HEK293 (cell line): ENCODE measurements at regions of chr1 and their contacts with region 1.

Region 1: DNA sequence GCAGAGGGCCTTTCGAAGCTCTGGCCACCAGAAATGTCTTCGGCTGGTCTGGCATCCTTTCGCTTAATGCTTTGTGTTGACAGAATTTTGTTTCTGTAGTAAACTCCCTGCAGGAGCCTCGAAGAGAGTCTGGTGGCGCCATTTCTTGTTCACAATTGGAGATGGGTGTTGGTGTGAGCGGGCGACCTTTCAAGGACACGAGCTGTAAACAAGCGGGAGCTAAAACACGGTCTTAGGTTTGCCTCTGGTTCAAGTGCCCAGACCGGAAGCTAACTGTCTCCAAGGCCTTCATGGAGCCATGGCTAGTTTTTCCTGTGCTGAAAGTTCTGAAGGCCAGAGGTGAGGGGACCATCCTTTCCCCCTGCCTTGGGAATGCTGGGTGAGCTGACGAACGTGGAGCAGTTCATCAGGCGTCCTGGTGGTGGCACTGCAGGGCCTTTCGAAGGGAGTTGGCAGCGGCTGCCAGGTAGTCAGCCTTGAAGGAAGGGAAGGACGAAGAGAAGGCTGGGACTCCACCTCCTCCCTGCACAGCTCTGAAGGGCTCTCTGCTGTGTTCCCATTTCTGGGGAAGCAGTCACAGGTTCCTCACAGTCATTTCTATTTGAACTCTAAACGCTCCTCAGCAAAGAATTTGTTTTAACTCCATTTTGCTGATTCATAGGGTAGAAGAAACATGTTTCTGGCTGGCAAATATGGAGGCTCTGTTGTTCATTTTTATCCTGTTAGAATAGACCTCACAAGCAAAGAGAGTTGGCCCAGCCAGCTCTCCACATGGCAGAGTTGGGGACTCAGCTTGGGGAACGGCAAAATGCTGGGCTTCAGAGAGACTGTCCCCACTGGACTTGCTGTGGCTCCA is 35.2 kb downstream of the URB2 start:
- H3K4me3 ChIP-seq: no peak overlapping the region
- H3K27ac ChIP-seq: no peak overlapping the region
- H3K4me1 ChIP-seq: 0 out of 2 replicates have a peak, but pooled peaks cover 4% of the 10 kb centered on the region
- CTCF ChIP-seq: peak; percentile 85

Region 2: GRCh38 chr1:229648406-229648805 is 12.8 kb before region 1 on chr1:
- CTCF ChIA-PET with region 1: interaction called, 11 read pairs
- POLR2A ChIA-PET with region 1: no interaction called
- H3K4me3 ChIP-seq: no peak overlapping the region
- H3K27ac ChIP-seq: no peak overlapping the region
- H3K4me1 ChIP-seq: no peaks in the 10 kb centered on the region
- CTCF ChIP-seq: no peak

Region 3: GRCh38 chr1:229714964-229715603 is 53.8 kb after region 1 on chr1:
- CTCF ChIA-PET with region 1: interaction called, 12 read pairs
- POLR2A ChIA-PET with region 1: no interaction called
- H3K4me3 ChIP-seq: no peak overlapping the region
- H3K27ac ChIP-seq: no peak overlapping the region
- H3K4me1 ChIP-seq: no peaks in the 10 kb centered on the region
- CTCF ChIP-seq: no peak

Region 4: GRCh38 chr1:229848752-229849677 is 187.8 kb after region 1 on chr1:
- CTCF ChIA-PET with region 1: interaction called, 15 read pairs
- POLR2A ChIA-PET with region 1: no interaction called
- H3K4me3 ChIP-seq: no peak overlapping the region
- H3K27ac ChIP-seq: no peak overlapping the region
- H3K4me1 ChIP-seq: peaks cover 5% of the 10 kb centered on the region
- CTCF ChIP-seq: no peak

Region 5: DNA sequence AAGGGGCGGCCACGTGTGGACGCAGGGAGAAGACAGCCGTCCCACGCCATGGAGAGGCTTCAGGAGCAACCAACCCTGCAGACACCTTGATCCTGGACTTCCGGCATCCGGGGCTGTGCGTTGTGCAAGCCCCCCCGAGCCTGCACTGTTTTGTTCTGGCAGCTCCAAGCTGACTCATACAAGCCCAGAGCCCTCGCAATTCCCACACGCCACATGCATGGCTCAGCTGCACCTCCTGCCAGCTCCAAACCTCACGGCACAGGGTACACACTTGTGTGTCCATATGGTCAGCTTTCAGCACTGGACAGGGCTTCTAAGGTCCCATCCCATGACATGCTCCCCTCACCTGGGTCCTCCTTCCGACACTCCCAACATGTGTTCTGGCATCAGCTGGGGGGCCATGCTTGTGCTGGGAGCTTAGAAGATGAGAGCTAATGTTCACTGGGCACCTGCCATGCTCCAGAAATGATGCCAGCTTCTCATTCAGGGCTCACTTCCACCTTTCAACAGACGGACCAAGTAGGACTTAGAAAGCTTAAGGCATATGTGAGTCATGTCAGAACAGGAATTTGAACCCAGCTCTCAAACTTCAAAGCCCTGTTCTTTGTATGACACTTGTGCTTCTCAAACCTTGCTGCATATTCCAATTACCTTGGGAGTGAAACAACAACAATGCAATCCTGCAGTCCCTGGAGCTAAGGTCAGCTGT is 627.5 kb after region 1 on chr1:
- CTCF ChIA-PET with region 1: interaction called, 10 read pairs
- POLR2A ChIA-PET with region 1: no interaction called
- H3K4me3 ChIP-seq: no peak overlapping the region
- H3K27ac ChIP-seq: no peak overlapping the region
- H3K4me1 ChIP-seq: no peaks in the 10 kb centered on the region
- CTCF ChIP-seq: no peak

Region 6: GRCh38 chr1:230303822-230304221 is 642.6 kb after region 1 on chr1:
- CTCF ChIA-PET with region 1: interaction called, 14 read pairs
- POLR2A ChIA-PET with region 1: no interaction called
- H3K4me3 ChIP-seq: no peak overlapping the region
- H3K27ac ChIP-seq: no peak overlapping the region
- H3K4me1 ChIP-seq: no peaks in the 10 kb centered on the region
- CTCF ChIP-seq: no peak

Region 7: DNA sequence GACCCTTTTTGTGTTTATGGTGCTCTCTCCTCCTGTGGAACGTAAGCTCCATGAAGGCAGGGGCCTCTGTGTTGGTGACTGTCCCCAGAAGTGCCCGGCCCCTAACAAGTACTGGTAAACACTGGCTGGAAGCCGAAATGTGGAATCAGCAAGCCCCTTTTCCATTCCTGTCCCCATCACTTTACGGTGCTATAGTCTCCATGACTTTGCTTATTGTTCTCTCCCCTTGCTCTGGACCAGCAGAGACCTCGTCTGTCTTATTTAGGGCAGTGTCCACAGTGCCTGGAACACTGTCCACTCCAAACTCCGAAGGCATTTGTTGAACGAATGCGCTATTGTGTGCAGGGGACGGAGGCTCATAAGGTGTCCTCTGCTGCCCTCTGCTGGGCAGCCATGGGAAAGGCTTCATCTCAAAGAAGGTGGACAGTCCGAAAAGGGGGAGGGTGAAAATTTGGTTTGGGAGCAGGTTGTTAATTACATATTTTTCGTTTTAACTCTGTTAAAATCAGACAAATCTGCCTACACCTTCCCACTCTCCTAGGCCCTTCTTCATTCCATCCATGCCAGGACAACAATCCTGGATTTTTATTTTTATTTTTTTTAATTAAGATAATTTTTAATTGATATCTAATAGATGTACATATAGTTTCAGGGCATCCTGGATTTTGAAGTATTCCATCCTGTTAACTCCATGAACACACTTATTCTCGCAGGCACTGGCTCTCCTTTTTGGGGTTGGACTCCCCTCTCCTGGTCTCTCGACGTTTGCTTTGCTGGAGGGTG is 649.3 kb after region 1 on chr1:
- CTCF ChIA-PET with region 1: interaction called, 14 read pairs
- POLR2A ChIA-PET with region 1: interaction called, 3 read pairs
- H3K4me3 ChIP-seq: no peak overlapping the region
- H3K27ac ChIP-seq: no peak overlapping the region
- H3K4me1 ChIP-seq: no peaks in the 10 kb centered on the region
- CTCF ChIP-seq: peak; percentile 96